Dendritic cell treated with granulocyte-macrophage colony-stimulating factor and Interleukin-4, amounts not matched to agents 40 ng/mL and 50 ng/mL, for 4 days (primary cell): ENCODE measurements at regions of chr9 and their contacts with region 1.

Region 1: GRCh38 chr9:128677794-128678193 is 11.2 kb upstream of the SET start:
- H3K4me3 Mint-ChIP-seq: no peak overlapping the region
- H3K27ac Mint-ChIP-seq: no peak overlapping the region
- H3K4me1 Mint-ChIP-seq: peaks cover 5% of the 10 kb centered on the region
- H3K27me3 Mint-ChIP-seq: no peaks in the 10 kb centered on the region

Region 2: DNA sequence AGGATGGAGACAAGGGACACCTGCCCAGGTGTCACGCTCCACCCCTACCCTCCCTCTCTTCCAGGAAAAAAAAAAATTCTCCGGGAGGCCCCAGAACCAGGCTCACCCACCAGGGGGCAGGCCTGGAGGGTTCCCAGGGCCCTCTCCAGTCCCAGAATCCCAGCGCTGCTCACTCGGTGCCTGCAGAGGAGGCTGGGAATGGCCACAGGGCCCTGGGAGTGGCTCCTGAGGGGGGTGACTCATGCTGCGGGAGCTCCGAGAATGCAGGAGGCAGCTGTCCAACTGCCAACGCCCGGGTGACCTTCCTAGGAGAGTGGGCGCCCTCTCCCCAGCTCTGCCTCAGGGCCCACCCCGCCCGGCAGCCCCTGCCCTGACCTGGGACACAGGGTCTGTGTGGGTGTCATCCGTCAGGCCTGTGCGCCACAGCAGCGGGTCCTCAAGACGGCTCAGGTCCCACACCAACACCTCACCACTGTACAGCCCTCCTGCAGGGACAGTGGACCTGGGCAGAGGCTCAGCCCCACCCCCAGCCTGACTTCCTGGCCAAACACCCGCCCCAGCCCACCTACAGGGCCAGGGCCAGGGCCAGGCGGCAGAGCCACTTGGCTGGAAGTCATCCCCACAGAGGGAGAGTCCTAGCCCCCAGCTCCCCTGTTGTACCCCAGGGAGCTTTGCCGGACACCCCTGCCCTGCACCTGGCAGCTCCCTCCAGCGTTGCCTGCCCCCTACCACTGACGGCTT is 42.3 kb before region 1 on chr9:
- intact Hi-C with region 1: loop called (anchors 1 kb)
- H3K4me3 Mint-ChIP-seq: no peak overlapping the region
- H3K27ac Mint-ChIP-seq: no peak overlapping the region
- H3K4me1 Mint-ChIP-seq: peaks cover 14% of the 10 kb centered on the region
- H3K27me3 Mint-ChIP-seq: no peaks in the 10 kb centered on the region